Activated T-helper 2 cell treated with anti-CD3 and anti-CD28 coated beads, Interferon-gamma antibody, Interleukin-2, Interleukin-4, amounts not matched to agents 10 μg/mL and 5 μg/mL and 100 μg/mL, durations not matched to agents 14 hours and 24 hours and 36 hours (primary cell): ENCODE measurements at regions of chr15 and their contacts with region 1.

Region 1: GRCh38 chr15:25790000-25790660 is 73.0 kb downstream of the ATP10A start:
- DNase-seq: peak; percentile 54
- H3K4me3 Mint-ChIP-seq: peak overlapping the region; percentile 45
- H3K27ac Mint-ChIP-seq: peak overlapping the region; percentile 92
- H3K4me1 Mint-ChIP-seq: peaks cover 61% of the 10 kb centered on the region
- H3K27me3 Mint-ChIP-seq: no peaks in the 10 kb centered on the region

Region 2: GRCh38 chr15:25761971-25762662 is 28.0 kb before region 1 on chr15:
- intact Hi-C with region 1: loop called (anchors 1 kb)
- DNase-seq: no peak
- H3K4me3 Mint-ChIP-seq: no peak overlapping the region
- H3K27ac Mint-ChIP-seq: peak overlapping the region; percentile 16
- H3K4me1 Mint-ChIP-seq: peaks cover 7% of the 10 kb centered on the region
- H3K27me3 Mint-ChIP-seq: no peaks in the 10 kb centered on the region

Region 3: DNA sequence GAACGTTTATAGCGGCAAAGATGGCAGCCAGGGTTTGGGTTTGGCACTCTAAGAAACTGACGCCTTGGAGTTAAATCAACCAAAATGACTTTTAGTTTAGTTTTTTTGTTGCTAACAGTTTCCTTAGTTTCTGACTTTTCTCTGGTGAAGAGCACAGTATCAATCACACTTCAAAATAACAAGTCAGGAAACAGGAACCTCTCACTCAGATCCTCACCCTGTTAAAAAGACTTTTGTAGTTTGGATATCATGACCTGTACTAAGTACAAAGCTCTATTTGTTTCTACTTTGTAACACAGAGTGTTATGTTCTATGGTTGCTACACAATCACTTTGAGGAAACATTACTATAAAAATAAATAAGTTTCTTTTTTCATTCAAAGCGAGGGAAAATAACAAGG is 21.9 kb after region 1 on chr15:
- intact Hi-C with region 1: loop called (anchors 1 kb)
- DNase-seq: no peak
- H3K4me3 Mint-ChIP-seq: peak overlapping the region; percentile 67
- H3K27ac Mint-ChIP-seq: peak overlapping the region; percentile 82
- H3K4me1 Mint-ChIP-seq: peaks cover 65% of the 10 kb centered on the region
- H3K27me3 Mint-ChIP-seq: no peaks in the 10 kb centered on the region

Region 4: GRCh38 chr15:25850154-25851111 is 60.3 kb after region 1 on chr15:
- intact Hi-C with region 1: loop called (anchors 1 kb)
- DNase-seq: peak; percentile 60
- H3K4me3 Mint-ChIP-seq: peak overlapping the region; percentile 92
- H3K27ac Mint-ChIP-seq: peak overlapping the region; percentile 99
- H3K4me1 Mint-ChIP-seq: peaks cover 82% of the 10 kb centered on the region
- H3K27me3 Mint-ChIP-seq: no peaks in the 10 kb centered on the region